ENCODE measurements at regions of chr7 and their contacts with region 1.

Region 1: GRCh38 chr7:122219253-122219865 is 75.3 kb upstream of the AASS start:
- DNase-seq: no peak
- ATAC-seq: no peak
- H3K4me3 Mint-ChIP-seq: no peak overlapping the region
- H3K27ac Mint-ChIP-seq: no peak overlapping the region
- H3K4me1 Mint-ChIP-seq: no peaks in the 10 kb centered on the region
- H3K27me3 Mint-ChIP-seq: no peaks in the 10 kb centered on the region
- CTCF ChIP-seq: peak; percentile 55

Region 2: DNA sequence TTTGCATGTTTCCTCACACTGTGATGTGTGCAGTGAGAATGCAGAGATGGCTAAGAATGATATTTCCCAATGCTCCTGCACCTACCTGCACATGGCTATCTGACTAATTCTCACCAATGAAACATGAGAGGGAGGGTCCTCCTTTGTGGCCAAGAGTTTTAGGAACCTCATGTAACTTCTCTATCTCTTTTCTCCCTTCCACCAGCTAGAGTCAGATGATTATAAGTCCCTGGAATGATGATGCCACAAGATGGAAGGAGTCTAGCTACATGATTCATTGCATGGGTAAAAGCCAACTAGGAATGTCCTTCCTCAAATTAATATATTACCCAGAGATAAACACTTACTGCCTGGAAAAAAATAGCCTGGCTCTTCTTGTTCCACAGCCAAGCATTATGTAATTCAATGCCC is 20.2 kb before region 1 on chr7:
- CTCF ChIA-PET with region 1: no interaction called
- POLR2A ChIA-PET with region 1: no interaction called
- intact Hi-C with region 1: no loop called
- DNase-seq: no peak
- ATAC-seq: no peak
- H3K4me3 Mint-ChIP-seq: no peak overlapping the region
- H3K27ac Mint-ChIP-seq: no peak overlapping the region
- H3K4me1 Mint-ChIP-seq: no peaks in the 10 kb centered on the region
- H3K27me3 Mint-ChIP-seq: no peaks in the 10 kb centered on the region
- CTCF ChIP-seq: no peak

Region 3: GRCh38 chr7:122248472-122248871 is 29.1 kb after region 1 on chr7:
- CTCF ChIA-PET with region 1: no interaction called
- POLR2A ChIA-PET with region 1: no interaction called
- intact Hi-C with region 1: no loop called
- DNase-seq: no peak
- ATAC-seq: no peak
- H3K4me3 Mint-ChIP-seq: no peak overlapping the region
- H3K27ac Mint-ChIP-seq: no peak overlapping the region
- H3K4me1 Mint-ChIP-seq: no peaks in the 10 kb centered on the region
- H3K27me3 Mint-ChIP-seq: no peaks in the 10 kb centered on the region
- CTCF ChIP-seq: no peak

Region 4: GRCh38 chr7:122532406-122533269 is 313.3 kb after region 1 on chr7:
- CTCF ChIA-PET with region 1: interaction called, 9 read pairs
- POLR2A ChIA-PET with region 1: no interaction called
- intact Hi-C with region 1: loop called (anchors 5 kb)
- DNase-seq: no peak
- ATAC-seq: no peak
- H3K4me3 Mint-ChIP-seq: no peak overlapping the region
- H3K27ac Mint-ChIP-seq: no peak overlapping the region
- H3K4me1 Mint-ChIP-seq: no peaks in the 10 kb centered on the region
- H3K27me3 Mint-ChIP-seq: no peaks in the 10 kb centered on the region
- CTCF ChIP-seq: peak; percentile 29

Measured in activated CD8-positive, alpha-beta T cell treated with anti-CD3 and anti-CD28 coated beads for 36 hours (primary cell).